GM12878 (cell line): ENCODE measurements at regions of chr14 and their contacts with region 1.

Region 1: DNA sequence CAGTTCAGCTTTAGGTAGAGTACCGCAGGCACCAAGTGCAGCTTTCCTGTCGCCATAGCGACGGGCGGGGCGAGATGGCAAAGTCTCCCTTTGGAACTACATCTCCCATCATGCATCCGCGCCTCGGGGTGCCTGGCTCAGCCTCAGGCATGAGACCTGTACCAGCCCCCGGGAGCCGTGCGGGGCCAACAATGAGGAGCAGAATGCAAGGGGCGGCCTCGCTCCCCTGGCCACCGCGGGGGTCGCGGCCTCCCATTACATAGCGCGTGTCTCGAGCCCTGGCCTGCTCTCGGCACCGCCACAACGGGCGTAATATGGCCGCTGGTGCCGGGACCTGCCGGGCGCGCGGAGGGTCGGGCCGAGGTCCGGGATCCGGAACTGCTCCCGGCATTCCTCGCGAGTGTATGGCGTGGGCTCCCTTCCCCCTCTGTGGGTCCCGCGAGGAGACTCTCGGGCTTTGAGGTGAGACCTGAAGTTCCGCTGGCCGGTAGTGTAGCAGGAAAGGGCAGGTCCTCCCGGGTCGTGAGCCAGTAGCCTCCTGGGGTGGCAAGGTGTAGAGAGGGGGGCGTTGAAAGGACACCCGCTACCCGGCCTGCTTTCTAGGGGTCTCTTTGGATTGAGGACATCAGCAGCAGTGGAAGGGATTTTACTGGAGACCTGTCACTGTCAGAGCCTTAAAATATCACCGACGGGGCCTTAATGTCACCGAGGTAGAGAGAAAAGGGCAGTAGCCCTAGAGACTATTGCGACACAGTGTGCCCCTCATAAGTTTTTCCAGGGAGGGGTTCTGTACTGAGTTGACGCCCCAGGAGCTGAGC is at the start of gene THTPA:
- DNase-seq: peak; percentile 72
- ATAC-seq: peak; percentile 85
- H3K4me3 ChIP-seq: peak within 1 kb of the TSS; percentile 82
- H3K27ac ChIP-seq: peak within 1 kb of the TSS; percentile 76
- H3K4me1 ChIP-seq: peaks cover 3% of the 10 kb centered on the region
- H3K27me3 ChIP-seq: no peaks in the 10 kb centered on the region
- CTCF ChIP-seq: no peak
- EP300 ChIP-seq: peak in 1 of 2 experiments; percentile 38; a peak in 2 of 4 replicates
- POLR2A ChIP-seq: peak; percentile 98
- RAD21 ChIP-seq: no peak
- polyA plus RNA-seq, gene THTPA: 3.1 to 5.9 TPM

Region 2: GRCh38 chr14:23327947-23328744 is 227.9 kb before region 1 on chr14:
- CTCF ChIA-PET with region 1: interaction called, 24 read pairs
- POLR2A ChIA-PET with region 1: no interaction called
- RAD21 ChIA-PET with region 1: no interaction called
- SMC1A ChIA-PET with region 1: no interaction called
- in situ Hi-C with region 1: loop called (anchors 5 kb)
- intact Hi-C with region 1: loop called (anchors 5 kb)
- DNase-seq: no peak
- ATAC-seq: peak; percentile 90
- H3K4me3 ChIP-seq: no peak overlapping the region
- H3K27ac ChIP-seq: no peak overlapping the region
- H3K4me1 ChIP-seq: peaks cover 1% of the 10 kb centered on the region; the same call in 1 of the 2 replicates
- H3K27me3 ChIP-seq: no peaks in the 10 kb centered on the region
- CTCF ChIP-seq: peak; percentile 79 to 83 (median 82)
- EP300 ChIP-seq: no peak
- POLR2A ChIP-seq: no peak
- RAD21 ChIP-seq: peak; percentile 77

Region 3: DNA sequence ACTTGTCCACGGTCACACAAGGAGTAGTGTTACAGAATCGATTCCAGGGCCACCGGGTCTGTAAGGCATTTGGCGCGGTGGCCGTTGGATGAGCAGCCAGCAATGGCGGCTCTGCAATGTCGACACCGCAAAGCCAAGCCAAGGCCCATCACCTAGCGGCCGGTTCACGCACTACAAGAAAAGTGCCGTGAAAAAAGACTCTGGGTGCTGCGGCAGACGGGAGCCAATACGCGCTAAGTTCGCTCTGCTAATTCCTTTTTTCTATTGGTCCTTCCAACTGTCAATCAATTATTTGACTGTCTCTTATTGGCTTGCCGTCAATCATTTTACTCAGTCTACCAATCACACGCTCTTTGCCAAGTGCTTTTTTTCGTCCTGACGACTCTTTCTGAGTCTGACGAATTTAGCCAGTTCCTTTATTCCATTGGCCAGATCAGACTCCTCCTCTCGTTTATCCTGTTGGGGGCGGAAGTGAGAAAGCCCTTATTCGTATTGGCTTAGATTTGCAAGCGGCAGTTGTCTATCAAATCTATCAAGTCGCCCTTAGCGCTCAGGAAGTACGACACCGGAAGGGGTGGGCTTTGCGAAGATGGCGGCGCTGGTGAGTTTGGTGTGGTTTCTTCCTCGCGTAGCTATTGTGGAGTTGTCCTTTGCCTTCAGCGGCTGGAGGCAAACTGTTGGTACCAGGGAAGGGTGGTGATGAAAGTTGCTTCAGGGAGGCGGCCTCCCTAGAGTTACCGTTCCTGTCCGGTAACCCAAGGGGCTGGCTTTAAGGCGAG is 86.8 kb before region 1 on chr14 and contains the start of gene NGDN:
- CTCF ChIA-PET with region 1: interaction called, 436 read pairs
- POLR2A ChIA-PET with region 1: interaction called, 3 read pairs
- RAD21 ChIA-PET with region 1: no interaction called
- SMC1A ChIA-PET with region 1: interaction called, 4 read pairs
- in situ Hi-C with region 1: no loop called
- intact Hi-C with region 1: no loop called
- DNase-seq: peak; percentile 100
- ATAC-seq: peak; percentile 99
- H3K4me3 ChIP-seq: peak within 1 kb of the TSS; percentile 88
- H3K27ac ChIP-seq: peak within 1 kb of the TSS; percentile 72
- H3K4me1 ChIP-seq: peaks cover 8% of the 10 kb centered on the region
- H3K27me3 ChIP-seq: no peaks in the 10 kb centered on the region
- CTCF ChIP-seq: peak; percentile 54 to 82 (median 73)
- EP300 ChIP-seq: no peak
- POLR2A ChIP-seq: peak; percentile 84
- RAD21 ChIP-seq: peak; percentile 13; the same call in 1 of the 2 replicates
- polyA plus RNA-seq, gene NGDN: 146 to 163 TPM

Region 4: GRCh38 chr14:23478111-23478759 is 77.9 kb before region 1 on chr14:
- CTCF ChIA-PET with region 1: interaction called, 436 read pairs
- POLR2A ChIA-PET with region 1: interaction called, 14 read pairs
- RAD21 ChIA-PET with region 1: interaction called, 39 read pairs
- SMC1A ChIA-PET with region 1: interaction called, 124 read pairs
- in situ Hi-C with region 1: loop called (anchors 5 kb)
- intact Hi-C with region 1: no loop called
- DNase-seq: peak; percentile 16
- ATAC-seq: peak; percentile 84
- H3K4me3 ChIP-seq: no peak overlapping the region
- H3K27ac ChIP-seq: no peak overlapping the region
- H3K4me1 ChIP-seq: no peaks in the 10 kb centered on the region
- H3K27me3 ChIP-seq: no peaks in the 10 kb centered on the region
- CTCF ChIP-seq: peak; percentile 56 to 78 (median 66); a peak in 5 of 6 replicates
- EP300 ChIP-seq: no peak
- POLR2A ChIP-seq: no peak
- RAD21 ChIP-seq: peak; percentile 71

Region 5: GRCh38 chr14:23483236-23483854 is 72.7 kb before region 1 on chr14:
- CTCF ChIA-PET with region 1: interaction called, 436 read pairs
- POLR2A ChIA-PET with region 1: interaction called, 14 read pairs
- RAD21 ChIA-PET with region 1: interaction called, 39 read pairs
- SMC1A ChIA-PET with region 1: interaction called, 124 read pairs
- in situ Hi-C with region 1: loop called (anchors 5 kb)
- intact Hi-C with region 1: no loop called
- DNase-seq: no peak
- ATAC-seq: peak; percentile 88
- H3K4me3 ChIP-seq: no peak overlapping the region
- H3K27ac ChIP-seq: no peak overlapping the region
- H3K4me1 ChIP-seq: no peaks in the 10 kb centered on the region
- H3K27me3 ChIP-seq: no peaks in the 10 kb centered on the region
- CTCF ChIP-seq: peak; percentile 29 to 54 (median 35); a peak in 4 of 6 replicates
- EP300 ChIP-seq: no peak
- POLR2A ChIP-seq: no peak
- RAD21 ChIP-seq: peak; percentile 51

Region 6: DNA sequence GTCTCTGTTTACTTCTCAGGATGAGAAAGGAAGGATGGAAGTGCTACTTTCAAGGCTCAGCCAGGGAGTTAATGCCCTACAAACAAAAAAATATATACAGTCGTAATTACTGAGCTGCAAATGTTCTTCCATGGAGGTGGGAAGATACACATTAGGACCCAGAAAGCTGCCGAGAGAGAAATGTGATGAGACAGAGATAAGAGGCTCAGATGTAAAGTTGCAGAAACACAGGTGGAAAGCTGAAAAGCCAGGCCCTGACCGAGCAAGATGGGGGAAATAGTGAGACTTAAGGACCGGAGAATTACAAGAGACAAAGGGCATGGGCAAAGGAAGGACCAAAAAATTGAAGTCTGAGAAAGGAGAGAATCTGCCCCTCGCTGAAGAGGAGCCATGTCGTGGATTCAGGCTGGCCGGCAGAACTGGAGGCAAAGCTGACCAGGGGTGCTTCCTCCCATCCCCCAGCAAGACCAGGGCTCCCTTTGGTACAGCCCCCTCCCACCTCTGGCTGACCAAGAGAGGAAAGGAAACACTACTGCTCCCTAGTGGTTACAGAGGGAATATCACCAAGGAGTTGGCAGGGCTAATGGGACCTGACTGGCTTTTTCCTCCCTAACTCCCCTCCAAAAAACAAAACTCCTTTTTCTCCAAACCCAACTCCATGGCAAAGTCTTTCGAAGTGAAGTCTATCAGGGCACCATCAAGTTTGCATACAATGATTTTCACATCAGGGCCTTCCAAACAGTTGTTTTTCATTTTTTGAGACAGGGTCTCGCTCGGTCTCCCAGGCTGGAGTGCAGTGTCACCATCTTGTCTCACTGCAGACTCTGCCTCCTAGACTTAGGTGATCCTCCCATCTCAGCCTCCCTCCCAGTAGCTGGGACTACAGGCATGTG is 16.6 kb before region 1 on chr14:
- CTCF ChIA-PET with region 1: interaction called, 131 read pairs
- POLR2A ChIA-PET with region 1: interaction called, 4 read pairs
- RAD21 ChIA-PET with region 1: interaction called, 4 read pairs
- SMC1A ChIA-PET with region 1: interaction called, 3 read pairs
- in situ Hi-C with region 1: no loop called
- intact Hi-C with region 1: no loop called
- DNase-seq: no peak
- ATAC-seq: peak; percentile 95
- H3K4me3 ChIP-seq: no peak overlapping the region
- H3K27ac ChIP-seq: no peak overlapping the region
- H3K4me1 ChIP-seq: no peaks in the 10 kb centered on the region
- H3K27me3 ChIP-seq: no peaks in the 10 kb centered on the region
- CTCF ChIP-seq: peak; percentile 68 to 85 (median 84)
- EP300 ChIP-seq: no peak
- POLR2A ChIP-seq: no peak
- RAD21 ChIP-seq: peak; percentile 61

Region 7: DNA sequence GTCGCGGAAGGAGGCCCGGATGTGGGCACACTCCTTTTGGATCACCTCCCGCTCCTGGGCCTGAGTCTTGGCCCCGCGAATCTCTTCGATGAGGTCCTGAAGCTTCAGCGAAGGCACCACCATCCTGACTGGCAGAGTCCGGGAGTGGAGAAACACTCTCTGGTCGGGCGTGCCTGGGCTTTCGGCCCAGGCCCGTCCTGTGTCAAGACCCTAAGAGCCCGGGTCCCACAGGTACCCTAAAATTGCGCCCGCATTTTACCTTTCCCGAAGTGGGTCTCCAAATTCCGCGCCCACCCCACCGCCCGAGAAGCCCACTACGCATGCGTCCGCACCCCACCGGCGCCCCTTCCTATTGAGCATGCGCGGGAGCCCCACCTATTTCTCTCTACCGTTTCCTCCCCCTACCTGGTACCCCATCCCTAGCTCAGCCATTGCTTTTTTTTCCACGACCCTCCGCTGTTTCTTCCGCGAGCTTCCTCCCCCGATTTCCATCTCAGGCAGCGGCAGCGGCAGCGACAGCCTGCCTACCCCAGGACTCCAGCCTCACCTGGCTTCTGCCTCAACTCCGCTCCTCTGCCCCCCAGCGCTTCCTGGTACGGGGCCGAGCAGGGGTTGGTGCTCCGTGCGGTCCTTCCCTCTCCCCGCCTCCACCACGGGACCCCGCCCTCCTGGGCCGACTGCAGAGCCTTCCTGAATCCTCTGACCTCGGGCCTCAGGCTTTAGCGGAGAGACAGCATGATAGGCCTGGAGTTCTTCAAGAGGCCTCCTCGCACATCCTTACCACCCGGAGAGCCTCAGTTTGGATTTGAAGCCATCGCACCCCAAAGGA is 11.3 kb after region 1 on chr14 and contains the start of gene AP1G2:
- CTCF ChIA-PET with region 1: interaction called, 33 read pairs
- POLR2A ChIA-PET with region 1: interaction called, 8 read pairs
- RAD21 ChIA-PET with region 1: interaction called, 6 read pairs
- SMC1A ChIA-PET with region 1: interaction called, 10 read pairs
- in situ Hi-C with region 1: no loop called
- intact Hi-C with region 1: no loop called
- DNase-seq: peak; percentile 69
- ATAC-seq: peak; percentile 95
- H3K4me3 ChIP-seq: peak within 1 kb of the TSS; percentile 93
- H3K27ac ChIP-seq: peak within 1 kb of the TSS; percentile 76
- H3K4me1 ChIP-seq: peaks cover 11% of the 10 kb centered on the region
- H3K27me3 ChIP-seq: no peaks in the 10 kb centered on the region
- CTCF ChIP-seq: no peak
- EP300 ChIP-seq: 0 out of 4 replicates have a peak, but pooled peaks of 1 of the 2 experiments have one; percentile 31
- POLR2A ChIP-seq: peak; percentile 92
- RAD21 ChIP-seq: no peak
- polyA plus RNA-seq, gene AP1G2: 55.6 to 65.5 TPM

Region 8: GRCh38 chr14:23727566-23728335 is 171.7 kb after region 1 on chr14:
- CTCF ChIA-PET with region 1: no interaction called
- POLR2A ChIA-PET with region 1: no interaction called
- RAD21 ChIA-PET with region 1: no interaction called
- SMC1A ChIA-PET with region 1: no interaction called
- in situ Hi-C with region 1: no loop called
- intact Hi-C with region 1: no loop called
- DNase-seq: no peak
- ATAC-seq: peak; percentile 88
- H3K4me3 ChIP-seq: no peak overlapping the region
- H3K27ac ChIP-seq: no peak overlapping the region
- H3K4me1 ChIP-seq: no peaks in the 10 kb centered on the region
- H3K27me3 ChIP-seq: no peaks in the 10 kb centered on the region
- CTCF ChIP-seq: peak; percentile 22 to 24 (median 22); a peak in 3 of 6 replicates
- EP300 ChIP-seq: no peak
- POLR2A ChIP-seq: no peak
- RAD21 ChIP-seq: peak; percentile 65